Activated naive CD8-positive, alpha-beta T cell treated with anti-CD3 and anti-CD28 coated beads, Interleukin-2, amount 10 ng/mL, durations not matched to agents 7 days and 5 days (primary cell): ENCODE measurements at regions of chr11 and their contacts with region 1.

Region 1: GRCh38 chr11:128039140-128040021 is 548.0 kb downstream of the ETS1 start:
- DNase-seq: peak; percentile 73
- ATAC-seq: peak; percentile 94
- H3K4me3 Mint-ChIP-seq: peak overlapping the region; percentile 75
- H3K27ac Mint-ChIP-seq: peak overlapping the region; percentile 93
- H3K4me1 Mint-ChIP-seq: peaks cover 39% of the 10 kb centered on the region
- H3K27me3 Mint-ChIP-seq: no peaks in the 10 kb centered on the region

Region 2: GRCh38 chr11:128052912-128053641 is 13.7 kb after region 1 on chr11:
- POLR2A ChIA-PET with region 1: interaction called, 40 read pairs
- DNase-seq: no peak
- ATAC-seq: peak; percentile 61
- H3K4me3 Mint-ChIP-seq: peak overlapping the region; percentile 74
- H3K27ac Mint-ChIP-seq: peak overlapping the region; percentile 81
- H3K4me1 Mint-ChIP-seq: peaks cover 47% of the 10 kb centered on the region
- H3K27me3 Mint-ChIP-seq: no peaks in the 10 kb centered on the region

Region 3: GRCh38 chr11:128125723-128126122 is 86.3 kb after region 1 on chr11:
- POLR2A ChIA-PET with region 1: interaction called, 11 read pairs
- DNase-seq: no peak
- ATAC-seq: no peak
- H3K4me3 Mint-ChIP-seq: no peak overlapping the region
- H3K27ac Mint-ChIP-seq: no peak overlapping the region
- H3K4me1 Mint-ChIP-seq: no peaks in the 10 kb centered on the region
- H3K27me3 Mint-ChIP-seq: no peaks in the 10 kb centered on the region